ENCODE measurements at regions of chr5 and their contacts with region 1.

Region 1: DNA sequence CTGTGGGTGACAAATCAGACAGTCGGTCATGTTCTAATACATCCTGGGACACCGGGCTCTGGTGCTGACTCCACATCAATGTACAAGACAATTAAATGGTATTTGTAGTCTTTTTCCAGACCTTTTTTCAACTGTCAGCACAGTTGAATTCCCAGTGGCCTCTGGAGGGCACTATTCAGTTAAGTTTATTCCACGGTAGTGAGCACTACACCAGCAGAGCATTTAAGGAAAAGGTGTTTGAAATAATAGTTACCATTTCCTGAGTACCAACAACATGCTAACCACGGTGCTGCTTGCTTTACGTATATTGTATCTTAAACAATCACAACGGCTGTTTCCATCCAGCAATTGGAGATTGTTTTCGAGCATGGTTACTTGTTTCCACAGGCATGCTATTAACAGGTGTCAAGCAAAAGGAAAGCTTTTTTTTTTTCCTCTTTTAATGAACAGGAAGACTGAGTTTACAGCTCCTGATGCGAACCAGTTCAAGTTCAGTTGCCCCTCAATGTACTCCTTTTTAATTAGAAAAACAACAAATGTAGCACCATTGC is 186.7 kb downstream of the PDZD2 start:
- DNase-seq: peak in 4 of 5 donors; percentile 14 to 48 (median 36)
- H3K4me3 ChIP-seq: no peak overlapping the region
- H3K4me3 Mint-ChIP-seq: peak overlapping the region in 3 of 8 donors; percentile 12 to 35 (median 20)
- H3K27ac ChIP-seq: no peak overlapping the region
- H3K27ac Mint-ChIP-seq: no peak overlapping the region
- H3K4me1 ChIP-seq: no peaks in the 10 kb centered on the region
- H3K4me1 Mint-ChIP-seq: no peaks in the 10 kb centered on the region
- H3K27me3 ChIP-seq: no peaks in the 10 kb centered on the region
- H3K27me3 Mint-ChIP-seq: peaks cover 2% of the 10 kb centered on the region in 2 donors

Region 2: GRCh38 chr5:31748458-31749172 is 77.0 kb before region 1 on chr5:
- CTCF ChIA-PET with region 1: no interaction called
- POLR2A ChIA-PET with region 1: no interaction called
- intact Hi-C with region 1: no loop called
- DNase-seq: no peak
- H3K4me3 ChIP-seq: no peak overlapping the region
- H3K4me3 Mint-ChIP-seq: no peak overlapping the region
- H3K27ac ChIP-seq: no peak overlapping the region
- H3K27ac Mint-ChIP-seq: no peak overlapping the region
- H3K4me1 ChIP-seq: no peaks in the 10 kb centered on the region
- H3K4me1 Mint-ChIP-seq: no peaks in the 10 kb centered on the region
- H3K27me3 ChIP-seq: no peaks in the 10 kb centered on the region
- H3K27me3 Mint-ChIP-seq: peaks cover 0 to 3% of the 10 kb centered on the region in 2 donors

Region 3: GRCh38 chr5:31889001-31889561 is 63.5 kb after region 1 on chr5:
- CTCF ChIA-PET with region 1: no interaction called
- POLR2A ChIA-PET with region 1: no interaction called
- intact Hi-C with region 1: no loop called
- DNase-seq: no peak
- H3K4me3 ChIP-seq: no peak overlapping the region
- H3K4me3 Mint-ChIP-seq: no peak overlapping the region
- H3K27ac ChIP-seq: no peak overlapping the region
- H3K27ac Mint-ChIP-seq: no peak overlapping the region
- H3K4me1 ChIP-seq: no peaks in the 10 kb centered on the region
- H3K4me1 Mint-ChIP-seq: no peaks in the 10 kb centered on the region
- H3K27me3 ChIP-seq: no peaks in the 10 kb centered on the region
- H3K27me3 Mint-ChIP-seq: peaks cover 0 to 11% of the 10 kb centered on the region in 2 donors

Region 4: GRCh38 chr5:32076699-32077695 is 251.4 kb after region 1 on chr5:
- CTCF ChIA-PET with region 1: interaction called, 12 read pairs
- POLR2A ChIA-PET with region 1: no interaction called
- intact Hi-C with region 1: no loop called
- DNase-seq: peak in 4 of 5 donors; percentile 19 to 44 (median 32)
- H3K4me3 ChIP-seq: no peak overlapping the region
- H3K4me3 Mint-ChIP-seq: no peak overlapping the region
- H3K27ac ChIP-seq: no peak overlapping the region
- H3K27ac Mint-ChIP-seq: no peak overlapping the region
- H3K4me1 ChIP-seq: no peaks in the 10 kb centered on the region
- H3K4me1 Mint-ChIP-seq: no peaks in the 10 kb centered on the region
- H3K27me3 ChIP-seq: no peaks in the 10 kb centered on the region
- H3K27me3 Mint-ChIP-seq: peaks cover 0 to 1% of the 10 kb centered on the region in 2 donors

Region 5: DNA sequence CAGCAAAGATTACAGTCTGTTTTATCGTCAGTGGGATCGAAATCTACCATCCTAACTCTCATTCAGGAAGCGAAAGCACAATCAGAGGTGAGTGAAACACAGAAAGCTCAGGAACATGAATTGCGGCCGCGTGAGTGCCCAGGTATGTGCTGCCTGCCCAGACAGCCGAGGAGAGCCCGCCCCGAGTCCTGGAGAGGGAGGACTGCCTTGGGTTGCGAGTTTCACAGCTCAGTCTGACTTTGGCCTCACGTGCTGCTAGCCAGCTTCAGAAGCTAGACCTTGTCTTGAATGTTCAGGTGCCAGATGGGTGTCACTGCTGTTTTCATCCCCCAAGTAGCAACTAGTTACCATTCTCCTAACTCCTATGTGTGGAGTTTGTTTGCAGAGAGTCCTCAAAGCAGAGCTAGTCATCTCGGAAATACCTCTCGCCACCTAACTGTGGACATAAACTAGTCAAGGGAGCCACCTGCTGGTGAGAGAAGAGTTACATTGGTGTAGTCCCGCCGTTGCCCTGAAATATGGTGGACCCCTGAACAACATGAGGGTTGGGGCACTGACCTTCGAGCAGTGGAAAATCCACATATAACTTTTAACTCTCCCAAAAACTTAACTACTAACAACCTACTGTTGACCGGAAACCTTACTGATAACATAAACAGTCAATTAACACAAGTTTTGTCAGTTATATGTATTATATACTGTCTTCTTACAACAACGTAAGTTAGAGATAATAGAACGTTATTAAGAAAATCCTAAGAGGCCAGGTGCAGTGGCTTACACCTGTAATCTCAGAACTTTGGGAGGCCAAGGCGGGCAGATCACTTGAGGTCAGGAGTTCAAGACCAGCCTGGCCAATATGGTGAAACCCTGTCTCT is 267.6 kb after region 1 on chr5:
- CTCF ChIA-PET with region 1: interaction called, 15 read pairs
- POLR2A ChIA-PET with region 1: no interaction called
- intact Hi-C with region 1: no loop called
- DNase-seq: peak; percentile 45 to 64 (median 51)
- H3K4me3 ChIP-seq: no peak overlapping the region
- H3K4me3 Mint-ChIP-seq: no peak overlapping the region
- H3K27ac ChIP-seq: no peak overlapping the region
- H3K27ac Mint-ChIP-seq: peak overlapping the region in 1 of 7 donors; percentile 11
- H3K4me1 ChIP-seq: no peaks in the 10 kb centered on the region
- H3K4me1 Mint-ChIP-seq: peaks cover 3 to 6% (median 5%) of the 10 kb centered on the region in 4 donors
- H3K27me3 ChIP-seq: no peaks in the 10 kb centered on the region
- H3K27me3 Mint-ChIP-seq: no peaks in the 10 kb centered on the region